Naive thymus-derived CD8-positive, alpha-beta T cell (primary cell): ENCODE measurements at regions of chr6 and their contacts with region 1.

Region 1: GRCh38 chr6:149493761-149494320 is 9.0 kb upstream of the ZC3H12D start:
- DNase-seq: no peak
- ATAC-seq: no peak
- H3K4me3 Mint-ChIP-seq: peak overlapping the region in 3 of 10 donors; percentile 8 to 68 (median 21)
- H3K27ac Mint-ChIP-seq: peak overlapping the region; percentile 69 to 99 (median 94)
- H3K4me1 Mint-ChIP-seq: peaks cover 16 to 78% (median 47%) of the 10 kb centered on the region in 4 donors
- H3K27me3 Mint-ChIP-seq: no peaks in the 10 kb centered on the region

Region 2: GRCh38 chr6:149508485-149508884 is 14.6 kb after region 1 on chr6:
- POLR2A ChIA-PET with region 1: interaction called, 40 read pairs
- DNase-seq: peak in 7 of 10 donors; percentile 38 to 80 (median 46)
- ATAC-seq: peak; percentile 92 to 97
- H3K4me3 Mint-ChIP-seq: peak overlapping the region in 8 of 10 donors; percentile 19 to 76 (median 54)
- H3K27ac Mint-ChIP-seq: peak overlapping the region; percentile 78 to 96 (median 92)
- H3K4me1 Mint-ChIP-seq: peaks cover 18 to 32% (median 25%) of the 10 kb centered on the region in 4 donors
- H3K27me3 Mint-ChIP-seq: no peaks in the 10 kb centered on the region

Region 3: DNA sequence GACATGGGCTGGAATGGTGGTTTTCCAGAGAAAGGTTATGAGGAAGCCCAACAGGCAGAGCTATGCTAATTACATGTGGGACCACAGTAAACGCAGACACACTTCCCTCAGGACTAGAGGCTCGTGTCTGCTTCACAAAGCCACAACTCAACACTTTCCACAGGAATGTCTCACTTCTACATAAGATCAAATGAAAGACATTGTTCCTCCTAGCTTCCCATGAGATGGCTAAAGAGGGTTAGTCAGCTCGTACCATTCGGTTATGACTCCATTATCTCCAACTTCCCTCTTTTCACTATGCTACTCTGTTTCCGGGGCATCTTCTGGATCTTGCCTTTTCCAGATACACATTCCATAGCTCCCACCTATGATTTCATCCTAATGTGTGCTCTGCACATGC is 20.1 kb after region 1 on chr6:
- POLR2A ChIA-PET with region 1: interaction called, 40 read pairs
- DNase-seq: no peak
- ATAC-seq: no peak
- H3K4me3 Mint-ChIP-seq: no peak overlapping the region
- H3K27ac Mint-ChIP-seq: peak overlapping the region; percentile 1 to 81 (median 64)
- H3K4me1 Mint-ChIP-seq: peaks cover 20 to 44% (median 28%) of the 10 kb centered on the region in 4 donors
- H3K27me3 Mint-ChIP-seq: no peaks in the 10 kb centered on the region